HEK293T (cell line): ENCODE measurements at regions of chr4 and their contacts with region 1.

Region 1: DNA sequence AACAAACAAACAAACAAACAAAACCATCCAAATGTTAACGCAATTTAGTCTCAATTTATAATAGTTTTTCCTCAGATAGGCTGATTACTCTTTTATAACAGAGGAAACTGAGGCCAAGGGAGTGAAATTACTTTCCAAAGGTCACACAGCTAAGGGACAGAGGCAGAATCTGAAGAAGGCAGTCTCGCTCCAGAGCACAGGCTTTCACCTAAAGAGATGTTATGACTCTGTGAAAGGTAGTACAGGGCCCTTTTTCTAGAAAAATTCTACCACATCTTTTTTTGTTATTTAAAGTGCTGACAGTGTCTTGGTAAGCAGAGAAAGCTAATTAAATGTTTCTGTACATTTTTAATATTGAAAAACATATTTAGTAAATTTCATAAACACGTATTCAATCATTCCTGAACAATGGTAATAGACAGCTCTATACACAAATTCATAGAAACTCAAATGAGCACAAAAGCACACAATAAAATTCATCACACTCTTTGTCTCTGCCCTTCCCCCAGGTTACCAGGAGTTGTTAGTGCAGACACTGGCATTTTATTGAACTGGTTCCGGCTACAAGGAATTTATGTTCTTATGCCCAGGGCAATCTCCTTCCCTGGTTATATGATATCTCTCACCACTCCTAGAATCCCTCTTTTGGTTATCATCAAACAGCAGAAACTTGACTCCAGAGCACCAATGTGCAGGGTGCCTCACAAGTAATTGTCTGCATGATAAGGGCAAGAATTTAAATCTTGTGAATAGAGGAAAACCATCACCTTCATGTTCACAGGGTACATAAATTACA is 7.7 kb upstream of the APBB2 start:
- DNase-seq: no peak

Region 2: GRCh38 chr4:40998675-40999358 is 223.2 kb before region 1 on chr4:
- CTCF ChIA-PET with region 1: interaction called, 10 read pairs
- POLR2A ChIA-PET with region 1: no interaction called
- DNase-seq: no peak

Region 3: DNA sequence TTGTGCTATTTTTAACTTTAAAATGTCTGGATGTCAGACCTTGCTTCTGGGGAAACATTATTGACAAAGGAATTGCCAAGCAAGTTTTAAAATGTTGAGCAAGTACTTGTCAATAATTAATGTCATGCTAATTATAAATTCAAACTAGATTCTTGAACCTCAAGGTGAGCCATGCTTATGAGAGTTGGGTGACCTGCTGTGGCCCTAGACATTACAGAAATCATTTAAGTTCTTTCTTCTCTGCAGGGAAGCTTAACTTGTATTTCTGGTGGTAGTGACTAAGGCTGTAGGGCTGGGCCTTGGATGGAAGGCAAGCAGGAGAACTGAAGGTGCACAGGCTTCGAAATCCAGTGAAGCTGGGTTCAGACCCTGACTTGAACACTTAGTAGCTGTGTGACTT is 19.9 kb after region 1 on chr4:
- CTCF ChIA-PET with region 1: no interaction called
- POLR2A ChIA-PET with region 1: no interaction called
- DNase-seq: no peak